Mammary epithelial cell (primary cell): ENCODE measurements at regions of chr9 and their contacts with region 1.

Region 1: DNA sequence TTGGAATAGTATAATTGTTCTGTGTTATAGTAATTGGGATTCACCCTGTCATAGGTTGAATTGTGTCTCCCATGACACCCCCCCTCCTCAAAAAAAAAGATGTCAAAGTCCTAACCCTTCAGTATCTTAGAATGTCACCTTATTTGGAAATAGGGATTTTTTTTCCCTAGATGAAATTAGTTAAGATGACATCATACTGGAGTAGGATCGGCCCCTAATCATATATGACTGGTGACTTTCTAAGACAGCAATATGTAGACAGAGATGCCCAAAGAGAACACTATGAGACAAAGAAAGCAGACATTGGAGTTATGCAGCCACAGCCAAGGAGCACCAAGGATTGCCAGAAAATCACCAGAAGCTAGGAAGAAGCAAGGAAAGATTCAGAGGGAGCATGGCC is 444.8 kb downstream of the TMEM38B start:
- DNase-seq: no peak
- H3K4me3 ChIP-seq: no peak overlapping the region
- H3K27ac ChIP-seq: no peak overlapping the region
- H3K4me1 ChIP-seq: no peaks in the 10 kb centered on the region
- H3K27me3 ChIP-seq: no peaks in the 10 kb centered on the region
- CTCF ChIP-seq: no peak

Region 2: GRCh38 chr9:105842023-105842644 is 297.0 kb before region 1 on chr9:
- CTCF ChIA-PET with region 1: no interaction called
- dilution Hi-C with region 1: no loop called
- in situ Hi-C with region 1: no loop called
- intact Hi-C with region 1: no loop called
- DNase-seq: peak; percentile 27
- H3K4me3 ChIP-seq: no peak overlapping the region
- H3K27ac ChIP-seq: no peak overlapping the region
- H3K4me1 ChIP-seq: no peaks in the 10 kb centered on the region
- H3K27me3 ChIP-seq: peaks cover 4% of the 10 kb centered on the region
- CTCF ChIP-seq: peak; percentile 88 to 90

Region 3: GRCh38 chr9:105912860-105913501 is 226.2 kb before region 1 on chr9:
- CTCF ChIA-PET with region 1: no interaction called
- dilution Hi-C with region 1: no loop called
- in situ Hi-C with region 1: no loop called
- intact Hi-C with region 1: no loop called
- DNase-seq: peak; percentile 85
- H3K4me3 ChIP-seq: no peak overlapping the region
- H3K27ac ChIP-seq: peak overlapping the region; percentile 58
- H3K4me1 ChIP-seq: peaks cover 43% of the 10 kb centered on the region
- H3K27me3 ChIP-seq: no peaks in the 10 kb centered on the region
- CTCF ChIP-seq: no peak

Region 4: GRCh38 chr9:106149949-106150348 is 10.8 kb after region 1 on chr9:
- CTCF ChIA-PET with region 1: no interaction called
- dilution Hi-C with region 1: no loop called
- in situ Hi-C with region 1: no loop called
- intact Hi-C with region 1: no loop called
- DNase-seq: no peak
- H3K4me3 ChIP-seq: no peak overlapping the region
- H3K27ac ChIP-seq: no peak overlapping the region
- H3K4me1 ChIP-seq: no peaks in the 10 kb centered on the region
- H3K27me3 ChIP-seq: no peaks in the 10 kb centered on the region
- CTCF ChIP-seq: no peak

Region 5: DNA sequence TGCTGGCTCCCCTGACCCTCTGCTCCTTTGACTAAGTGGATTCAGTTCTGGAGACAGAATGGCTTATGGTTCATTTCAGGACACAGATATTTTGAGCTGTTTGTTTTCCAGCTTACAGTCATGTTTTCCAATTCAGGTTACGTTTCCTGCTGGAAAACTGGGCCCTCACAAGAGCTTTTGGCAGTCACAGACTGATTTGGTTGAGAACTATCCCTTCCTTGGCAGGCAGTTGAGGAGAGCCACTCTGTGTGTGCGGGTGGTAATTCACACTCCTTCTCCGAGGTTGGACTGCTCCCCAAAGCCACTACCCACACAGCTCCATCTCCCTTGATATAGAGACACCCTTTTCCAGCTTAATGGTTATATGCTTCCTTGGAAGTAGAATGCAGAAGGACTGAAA is 89.7 kb after region 1 on chr9:
- CTCF ChIA-PET with region 1: no interaction called
- dilution Hi-C with region 1: loop called (anchors 5 kb)
- in situ Hi-C with region 1: no loop called
- intact Hi-C with region 1: no loop called
- DNase-seq: no peak
- H3K4me3 ChIP-seq: no peak overlapping the region
- H3K27ac ChIP-seq: no peak overlapping the region
- H3K4me1 ChIP-seq: no peaks in the 10 kb centered on the region
- H3K27me3 ChIP-seq: no peaks in the 10 kb centered on the region
- CTCF ChIP-seq: no peak